HEK293 (cell line): ENCODE measurements at regions of chr17 and their contacts with region 1.

Region 1: GRCh38 chr17:75271233-75271954 is 363 bp upstream of the MIF4GD start:
- H3K4me3 ChIP-seq: peak overlapping the region; percentile 78
- H3K27ac ChIP-seq: peak overlapping the region; percentile 94; the same call in 1 of the 2 replicates
- H3K4me1 ChIP-seq: peaks cover 9% of the 10 kb centered on the region; the same call in 1 of the 2 replicates
- CTCF ChIP-seq: peak; percentile 69

Region 2: GRCh38 chr17:75238684-75239191 is 32.7 kb before region 1 on chr17:
- CTCF ChIA-PET with region 1: interaction called, 45 read pairs
- POLR2A ChIA-PET with region 1: interaction called, 26 read pairs
- H3K4me3 ChIP-seq: no peak overlapping the region
- H3K27ac ChIP-seq: no peak overlapping the region
- H3K4me1 ChIP-seq: no peaks in the 10 kb centered on the region
- CTCF ChIP-seq: peak; percentile 86

Region 3: DNA sequence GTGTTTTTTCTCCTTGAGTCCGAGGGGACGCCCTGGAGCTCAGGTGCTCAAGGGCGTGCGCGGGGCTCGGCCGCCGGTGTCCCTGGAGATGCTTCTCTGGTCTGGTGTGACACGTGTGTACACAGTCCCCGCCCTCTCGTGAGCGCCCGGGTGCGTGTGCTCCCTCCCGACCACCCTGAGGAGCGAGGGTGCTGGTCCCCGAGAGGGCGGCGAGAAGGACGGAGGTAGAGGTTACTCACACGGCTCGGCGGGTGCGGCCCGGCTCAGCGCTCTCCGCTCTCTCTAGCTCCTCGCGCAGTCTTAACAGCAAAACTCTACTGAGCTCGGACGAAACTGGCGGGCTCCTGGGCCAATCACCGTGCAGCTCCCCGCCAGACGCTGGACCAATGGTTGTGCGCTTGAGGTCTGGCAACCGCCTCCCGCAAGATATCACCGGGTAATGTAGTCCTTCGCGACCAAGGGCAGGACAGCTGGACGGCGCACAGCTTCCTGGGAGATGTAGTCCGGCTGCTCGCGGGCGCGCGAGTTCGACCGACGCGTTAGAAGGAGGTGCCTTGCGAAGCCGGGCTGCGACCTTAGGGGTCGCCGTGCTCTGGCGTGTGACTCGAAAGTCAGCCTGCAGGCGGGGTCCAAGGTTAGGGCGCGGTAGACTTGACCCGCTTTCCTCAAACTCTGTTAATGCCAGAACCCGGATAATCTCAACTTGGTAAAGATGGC is 17.9 kb after region 1 on chr17 and contains the start of gene SLC25A19:
- CTCF ChIA-PET with region 1: interaction called, 22 read pairs
- POLR2A ChIA-PET with region 1: interaction called, 111 read pairs
- H3K4me3 ChIP-seq: peak within 1 kb of the TSS; percentile 79
- H3K27ac ChIP-seq: peak within 1 kb of the TSS; percentile 79
- H3K4me1 ChIP-seq: peaks cover 4% of the 10 kb centered on the region; the same call in 1 of the 2 replicates
- CTCF ChIP-seq: peak; percentile 90

Region 4: DNA sequence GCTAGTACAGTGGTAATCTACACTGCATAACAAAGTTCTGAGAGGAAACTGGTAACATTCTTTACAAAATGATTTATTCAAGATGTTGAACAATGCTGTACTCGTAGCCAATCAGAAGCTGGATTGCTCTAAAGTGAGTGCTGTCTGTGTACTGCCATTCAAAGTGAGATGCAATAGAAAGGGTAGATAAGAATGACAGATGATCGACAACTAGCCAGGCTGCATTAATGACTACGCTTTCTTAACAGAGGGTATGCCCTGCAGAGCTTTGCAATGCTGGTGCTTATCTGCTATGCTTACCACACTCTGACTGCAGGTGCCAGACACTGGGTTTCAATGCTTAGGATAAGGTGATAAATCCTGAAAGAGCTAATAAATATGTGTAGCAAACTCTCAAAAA is 63.9 kb after region 1 on chr17:
- CTCF ChIA-PET with region 1: no interaction called
- POLR2A ChIA-PET with region 1: no interaction called
- H3K4me3 ChIP-seq: no peak overlapping the region
- H3K27ac ChIP-seq: no peak overlapping the region
- H3K4me1 ChIP-seq: peaks cover 7% of the 10 kb centered on the region
- CTCF ChIP-seq: no peak

Region 5: DNA sequence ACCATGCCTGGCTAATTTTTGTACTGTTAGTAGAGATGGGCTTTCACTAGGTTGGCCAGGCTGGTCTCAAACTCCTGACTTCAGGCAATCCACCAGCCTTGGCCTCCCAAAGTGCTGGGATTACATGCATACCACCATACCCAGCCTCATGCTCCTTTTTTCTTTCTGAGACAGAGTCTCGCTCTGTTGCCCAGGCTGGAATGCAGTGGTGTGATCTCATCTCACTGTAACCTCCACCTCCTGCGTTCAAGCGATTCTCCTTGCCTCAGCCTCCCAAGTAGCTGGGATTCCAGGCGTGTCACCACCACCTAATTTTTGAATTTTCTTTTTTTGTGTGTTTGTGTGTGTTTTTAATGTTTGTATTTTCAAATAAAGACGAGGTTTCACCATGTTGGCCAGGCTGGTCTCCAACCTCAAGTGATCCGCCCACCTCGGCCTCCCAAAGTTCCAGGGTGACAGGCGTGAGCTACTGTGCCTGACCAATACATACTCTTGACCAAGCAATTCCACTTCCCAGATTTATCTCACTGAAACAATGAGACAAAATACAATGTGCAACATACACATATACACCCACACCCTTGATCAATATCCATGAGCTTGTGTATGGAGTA is 129.0 kb after region 1 on chr17:
- CTCF ChIA-PET with region 1: interaction called, 11 read pairs
- POLR2A ChIA-PET with region 1: interaction called, 30 read pairs
- H3K4me3 ChIP-seq: no peak overlapping the region
- H3K27ac ChIP-seq: no peak overlapping the region
- H3K4me1 ChIP-seq: peaks cover 12% of the 10 kb centered on the region
- CTCF ChIP-seq: no peak

Region 6: GRCh38 chr17:75412455-75413317 is 141.3 kb after region 1 on chr17:
- CTCF ChIA-PET with region 1: interaction called, 30 read pairs
- POLR2A ChIA-PET with region 1: interaction called, 13 read pairs
- H3K4me3 ChIP-seq: no peak overlapping the region
- H3K27ac ChIP-seq: no peak overlapping the region
- H3K4me1 ChIP-seq: no peaks in the 10 kb centered on the region
- CTCF ChIP-seq: peak; percentile 81